Activated CD4-positive, alpha-beta memory T cell treated with anti-CD3 and anti-CD28 coated beads for 36 hours (primary cell): ENCODE measurements at regions of chrX and their contacts with region 1.

Region 1: DNA sequence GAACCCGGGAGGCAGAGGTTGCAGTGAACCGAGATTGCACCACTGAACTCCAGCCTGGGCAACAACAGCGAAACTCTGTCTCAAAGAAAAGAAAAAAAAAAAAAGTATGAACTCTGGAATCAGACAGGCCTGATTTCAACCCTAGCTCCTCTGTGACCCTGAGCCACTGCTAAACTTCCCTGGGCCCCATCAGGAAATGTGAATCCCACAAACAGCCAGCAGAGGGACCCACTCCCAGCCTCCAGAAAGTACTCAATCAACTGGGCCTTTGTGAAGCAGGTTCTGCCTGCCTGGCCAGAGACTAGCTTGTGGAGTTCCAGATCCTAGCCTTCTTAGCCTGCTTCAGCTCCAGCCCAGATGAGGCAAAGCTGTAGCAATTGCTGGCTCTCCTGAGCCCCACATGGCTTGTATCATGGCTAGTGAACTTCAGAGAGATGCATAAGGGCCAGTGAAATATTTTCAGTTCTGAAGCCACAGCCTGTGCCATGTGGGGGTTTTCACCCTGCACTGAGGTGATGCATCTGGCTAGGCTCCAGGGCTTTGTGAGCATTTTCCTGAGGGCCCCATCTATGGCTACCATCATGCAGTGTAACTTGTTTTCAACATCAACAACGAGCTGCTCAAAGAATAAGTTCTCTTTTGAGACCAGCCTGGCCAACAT is 7.2 kb upstream of the IDS start:
- DNase-seq: peak; percentile 70
- H3K4me3 Mint-ChIP-seq: no peak overlapping the region
- H3K27ac Mint-ChIP-seq: peak overlapping the region; percentile 42
- H3K4me1 Mint-ChIP-seq: peaks cover 19% of the 10 kb centered on the region
- H3K27me3 Mint-ChIP-seq: no peaks in the 10 kb centered on the region

Region 2: DNA sequence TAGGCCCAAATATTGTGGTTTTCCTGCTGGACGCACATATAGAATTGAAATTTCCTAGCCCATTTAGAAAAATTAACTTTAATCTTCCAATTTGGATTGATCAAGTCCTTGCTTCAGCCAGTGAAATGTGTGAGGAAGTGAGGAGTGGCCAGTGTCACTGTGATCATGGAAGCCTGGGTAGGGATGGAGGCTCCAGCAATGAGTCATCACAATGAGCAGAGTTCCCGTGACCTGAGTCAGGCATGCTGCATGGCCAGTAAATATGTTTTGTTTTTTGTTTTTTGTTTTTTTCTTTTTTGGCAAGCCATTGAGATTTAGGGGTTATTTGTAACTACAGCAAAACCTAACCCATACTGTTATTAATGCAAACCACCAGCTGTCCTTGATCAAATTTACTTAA is 59.3 kb before region 1 on chrX:
- CTCF ChIA-PET with region 1: no interaction called
- POLR2A ChIA-PET with region 1: no interaction called
- intact Hi-C with region 1: no loop called
- DNase-seq: no peak
- H3K4me3 Mint-ChIP-seq: no peak overlapping the region
- H3K27ac Mint-ChIP-seq: no peak overlapping the region
- H3K4me1 Mint-ChIP-seq: no peaks in the 10 kb centered on the region
- H3K27me3 Mint-ChIP-seq: peaks cover 3% of the 10 kb centered on the region

Region 3: DNA sequence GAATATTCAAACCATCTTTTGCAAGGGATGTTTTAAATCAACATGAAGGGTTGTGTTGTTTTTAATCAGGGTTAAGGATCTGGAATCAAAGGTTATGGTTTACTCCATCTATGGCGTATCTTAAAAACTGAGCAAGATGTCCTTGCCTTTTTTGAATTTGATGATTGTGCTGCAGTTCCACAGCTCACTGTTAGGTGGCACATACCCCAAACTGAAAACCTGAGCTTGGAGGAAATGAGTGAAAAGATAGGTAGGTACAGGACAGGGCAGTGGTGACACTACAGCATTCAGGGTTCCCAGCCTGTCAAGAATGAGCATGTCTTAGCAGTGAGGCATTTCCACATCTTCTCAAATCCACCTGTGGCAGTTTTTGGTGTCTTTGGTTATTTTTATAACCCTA is 15.3 kb after region 1 on chrX:
- CTCF ChIA-PET with region 1: interaction called, 27 read pairs
- POLR2A ChIA-PET with region 1: no interaction called
- intact Hi-C with region 1: no loop called
- DNase-seq: peak; percentile 53
- H3K4me3 Mint-ChIP-seq: no peak overlapping the region
- H3K27ac Mint-ChIP-seq: peak overlapping the region; percentile 65
- H3K4me1 Mint-ChIP-seq: peaks cover 37% of the 10 kb centered on the region
- H3K27me3 Mint-ChIP-seq: no peaks in the 10 kb centered on the region